HEK293 (cell line): ENCODE measurements at regions of chr19 and their contacts with region 1.

Region 1: GRCh38 chr19:41785653-41786052 is 10.7 kb upstream of the CEACAM3 start:
- H3K4me3 ChIP-seq: no peak overlapping the region
- H3K27ac ChIP-seq: no peak overlapping the region
- H3K4me1 ChIP-seq: peaks cover 3% of the 10 kb centered on the region; the same call in 1 of the 2 replicates
- CTCF ChIP-seq: peak; percentile 70

Region 2: GRCh38 chr19:41479757-41480191 is 305.9 kb before region 1 on chr19:
- CTCF ChIA-PET with region 1: no interaction called
- POLR2A ChIA-PET with region 1: no interaction called
- H3K4me3 ChIP-seq: no peak overlapping the region
- H3K27ac ChIP-seq: no peak overlapping the region
- H3K4me1 ChIP-seq: no peaks in the 10 kb centered on the region
- CTCF ChIP-seq: no peak

Region 3: DNA sequence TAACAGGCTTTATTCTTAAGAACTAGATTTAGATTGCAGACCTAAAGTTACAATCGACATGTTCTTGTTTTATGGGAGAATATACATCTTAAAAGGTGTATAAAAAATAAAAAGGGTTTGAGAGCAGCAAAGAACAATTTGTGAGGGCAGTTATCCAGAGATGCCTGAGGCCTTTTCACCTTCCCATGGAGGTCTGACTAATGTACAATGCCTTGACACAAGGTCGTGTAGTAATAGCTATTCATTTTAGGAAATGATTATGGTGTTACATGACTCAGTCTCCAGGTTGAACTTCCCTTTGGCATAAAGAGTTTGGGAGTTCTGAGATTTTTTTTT is 10.3 kb before region 1 on chr19:
- CTCF ChIA-PET with region 1: interaction called, 129 read pairs
- POLR2A ChIA-PET with region 1: no interaction called
- H3K4me3 ChIP-seq: no peak overlapping the region
- H3K27ac ChIP-seq: no peak overlapping the region
- H3K4me1 ChIP-seq: no peaks in the 10 kb centered on the region
- CTCF ChIP-seq: no peak

Region 4: DNA sequence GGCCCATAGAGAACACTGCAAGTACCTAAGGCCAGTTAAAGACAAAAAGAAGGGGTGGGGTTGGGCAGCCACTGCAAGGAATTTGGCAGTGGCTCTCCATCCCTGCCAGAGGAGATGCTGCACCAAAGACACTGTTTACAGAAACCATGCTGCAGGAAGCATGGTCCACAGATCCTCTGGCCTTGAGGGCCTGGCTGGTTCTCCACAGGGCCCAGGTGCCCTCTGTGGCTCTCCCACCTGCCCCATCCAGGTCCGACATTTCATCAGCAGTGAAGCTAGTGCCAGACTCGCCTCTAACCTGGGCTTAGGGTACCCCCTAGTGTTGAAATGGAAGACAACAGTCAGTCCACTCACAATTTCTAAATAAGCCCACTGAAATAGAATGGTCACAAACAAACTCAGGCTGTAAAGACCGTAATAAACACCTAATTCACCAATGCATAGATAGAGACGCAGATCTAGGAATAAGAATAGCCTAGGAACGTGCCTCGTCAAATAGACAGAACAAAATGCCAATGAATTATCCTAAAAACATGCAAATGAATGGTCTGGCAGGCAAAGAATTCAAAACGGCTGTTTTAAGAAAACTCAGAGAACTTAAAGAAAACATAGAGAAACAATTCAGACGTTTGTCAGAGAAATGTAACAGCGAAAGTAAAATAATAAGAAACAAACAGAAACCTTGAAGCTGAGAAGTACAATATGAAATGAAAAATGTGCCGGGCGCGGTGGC is 35.5 kb after region 1 on chr19:
- CTCF ChIA-PET with region 1: interaction called, 202 read pairs
- POLR2A ChIA-PET with region 1: no interaction called
- H3K4me3 ChIP-seq: no peak overlapping the region
- H3K27ac ChIP-seq: no peak overlapping the region
- H3K4me1 ChIP-seq: no peaks in the 10 kb centered on the region
- CTCF ChIP-seq: peak; percentile 86

Region 5: DNA sequence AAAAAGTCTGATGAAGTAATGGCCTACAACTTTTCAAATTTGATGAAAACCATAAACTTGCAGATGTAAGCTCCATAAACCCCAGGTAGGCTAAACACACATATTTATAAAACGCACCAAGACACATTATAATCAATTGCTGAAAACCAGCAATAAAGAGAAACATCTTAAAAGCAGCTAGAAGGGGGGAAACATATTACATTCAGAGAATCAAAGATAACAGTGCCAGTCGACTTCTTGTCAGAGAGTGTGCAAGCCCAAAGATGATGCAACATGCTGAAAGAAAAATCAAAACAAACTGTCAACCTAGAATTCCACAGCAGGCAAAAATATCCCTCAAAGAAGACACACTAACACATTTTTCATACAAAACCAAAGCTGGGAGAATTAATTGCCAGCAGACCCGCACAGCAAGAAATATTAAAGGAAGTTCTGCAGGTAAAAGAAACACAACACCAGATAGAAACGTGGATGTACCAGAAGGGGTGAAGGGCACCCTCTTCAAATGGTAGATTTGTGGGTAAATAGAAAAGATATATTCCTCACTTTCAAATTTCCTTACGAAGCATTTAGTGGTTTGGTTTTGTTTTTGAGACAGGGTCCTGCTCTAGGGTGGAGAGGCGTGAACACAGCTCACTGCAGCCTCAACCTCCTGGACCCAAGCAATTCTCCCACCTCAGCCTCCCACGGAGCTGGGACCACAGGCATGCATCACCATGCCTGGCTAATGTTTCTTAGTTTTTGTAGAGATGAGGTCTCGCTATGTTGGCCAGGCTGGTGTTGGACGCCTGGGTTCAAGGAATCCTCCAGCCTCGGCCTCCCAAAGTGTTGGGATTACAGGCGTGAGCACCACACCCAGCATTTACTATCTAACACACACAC is 224.8 kb after region 1 on chr19:
- CTCF ChIA-PET with region 1: no interaction called
- POLR2A ChIA-PET with region 1: no interaction called
- H3K4me3 ChIP-seq: no peak overlapping the region
- H3K27ac ChIP-seq: peak overlapping the region; percentile 52
- H3K4me1 ChIP-seq: peaks cover 3% of the 10 kb centered on the region; the same call in 1 of the 2 replicates
- CTCF ChIP-seq: no peak